ENCODE measurements at regions of chr16 and their contacts with region 1.

Region 1: DNA sequence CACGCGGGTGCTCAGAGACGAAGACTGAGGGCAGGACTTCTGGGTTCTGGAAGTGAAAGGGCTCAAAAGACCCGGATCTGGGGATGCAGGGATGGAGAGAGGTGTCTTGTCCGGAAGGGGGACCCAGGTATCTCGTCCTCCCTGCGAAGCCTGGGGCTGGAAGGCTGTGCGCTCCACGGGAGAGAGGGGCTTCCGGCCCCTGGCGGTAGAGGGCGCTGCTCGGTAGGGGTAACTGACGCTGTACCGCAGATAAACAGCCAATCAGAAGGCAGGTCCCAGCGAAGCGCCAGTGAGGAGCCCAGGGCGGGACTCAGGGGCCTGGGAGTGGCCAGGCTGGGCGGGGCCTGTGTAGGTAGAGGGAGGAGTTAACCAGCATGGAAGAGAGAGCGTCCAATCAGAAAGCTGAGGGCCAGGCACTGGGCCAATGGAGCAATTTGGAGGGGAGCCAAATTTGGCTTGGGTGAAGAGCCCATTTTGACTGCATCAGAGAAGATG is 804 bp downstream of the TGFB1I1 start:
- DNase-seq: no peak
- H3K4me3 ChIP-seq: peak overlapping the region; percentile 72 to 76
- H3K27ac ChIP-seq: peak overlapping the region; percentile 96
- H3K4me1 ChIP-seq: peaks cover 36% of the 10 kb centered on the region
- H3K27me3 ChIP-seq: no peaks in the 10 kb centered on the region
- CTCF ChIP-seq: peak; percentile 47 to 56 (median 49)
- POLR2A ChIP-seq: no peak

Region 2: GRCh38 chr16:31507929-31508705 is 35.4 kb after region 1 on chr16 and contains the start of gene RUSF1:
- intact Hi-C with region 1: loop called (anchors 5 kb)
- DNase-seq: peak in 1 of 2 donors; percentile 90
- H3K4me3 ChIP-seq: peak within 1 kb of the TSS; percentile 63 to 80
- H3K27ac ChIP-seq: peak within 1 kb of the TSS; percentile 87
- H3K4me1 ChIP-seq: peaks cover 38% of the 10 kb centered on the region
- H3K27me3 ChIP-seq: no peaks in the 10 kb centered on the region
- CTCF ChIP-seq: peak in 1 of 3 experiments; percentile 22
- POLR2A ChIP-seq: peak in 1 of 2 donors; percentile 81
- total RNA-seq, gene RUSF1: 64.6 TPM

Measured in vagina (tissue), 2 donors.